HCT116 (cell line): ENCODE measurements at regions of chrX and their contacts with region 1.

Region 1: DNA sequence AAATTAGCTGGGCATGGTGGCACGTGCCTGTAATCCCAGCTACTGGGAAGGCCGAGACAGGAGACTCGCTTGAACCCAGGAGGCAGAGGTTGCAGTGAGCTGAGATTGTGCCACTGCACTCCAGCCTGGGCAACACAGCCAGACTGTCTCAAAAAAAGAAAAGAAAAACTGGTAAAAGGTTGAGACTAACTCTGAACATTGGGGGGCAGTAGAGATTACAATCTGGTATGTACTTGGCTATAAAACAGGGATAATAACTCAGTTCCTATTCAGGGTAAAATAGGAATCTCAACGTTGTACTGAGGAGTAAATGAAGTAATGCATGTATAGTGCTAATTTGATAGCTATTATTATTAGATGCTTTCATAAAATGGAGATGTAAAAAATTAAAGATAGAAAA is 12.5 kb upstream of the KLF8 start:
- DNase-seq: peak; percentile 12
- ATAC-seq: peak; percentile 64; the same call in 1 of the 2 replicates
- H3K4me3 ChIP-seq: no peak overlapping the region
- H3K27ac ChIP-seq: no peak overlapping the region
- H3K4me1 ChIP-seq: no peaks in the 10 kb centered on the region
- H3K27me3 ChIP-seq: no peaks in the 10 kb centered on the region
- CTCF ChIP-seq: peak; percentile 13 to 36 (median 22); a peak in 3 of 6 replicates
- POLR2A ChIP-seq: no peak
- RAD21 ChIP-seq: peak; percentile 46; the same call in 1 of the 2 replicates

Region 2: DNA sequence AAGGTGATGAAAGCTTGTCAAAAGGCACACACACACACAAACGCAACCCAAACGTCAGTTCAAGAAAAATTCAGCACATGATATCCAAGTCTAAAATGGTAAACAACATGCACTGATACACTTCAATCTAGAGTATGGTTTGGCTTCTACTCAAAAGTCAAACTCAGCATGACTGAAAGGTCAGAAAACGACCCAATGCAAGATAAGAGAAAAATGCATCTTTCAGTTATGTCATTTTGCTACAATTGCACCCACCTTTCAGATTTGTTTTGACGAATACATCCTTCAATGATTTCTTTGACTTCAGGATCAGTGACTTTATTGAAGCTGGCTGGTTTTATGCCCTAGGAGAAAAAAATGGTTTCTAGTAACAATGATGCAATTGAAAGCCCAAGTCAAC is 1918.2 kb before region 1 on chrX:
- CTCF ChIA-PET with region 1: no interaction called
- POLR2A ChIA-PET with region 1: no interaction called
- RAD21 ChIA-PET with region 1: no interaction called
- intact Hi-C with region 1: no loop called
- DNase-seq: no peak
- ATAC-seq: no peak
- H3K4me3 ChIP-seq: no peak overlapping the region
- H3K27ac ChIP-seq: no peak overlapping the region
- H3K4me1 ChIP-seq: no peaks in the 10 kb centered on the region
- H3K27me3 ChIP-seq: no peaks in the 10 kb centered on the region
- CTCF ChIP-seq: no peak
- POLR2A ChIP-seq: no peak
- RAD21 ChIP-seq: no peak

Region 3: GRCh38 chrX:55919367-55920221 is 300.1 kb before region 1 on chrX:
- CTCF ChIA-PET with region 1: no interaction called
- POLR2A ChIA-PET with region 1: no interaction called
- RAD21 ChIA-PET with region 1: no interaction called
- intact Hi-C with region 1: loop called (anchors 10 kb)
- DNase-seq: no peak
- ATAC-seq: peak; percentile 75
- H3K4me3 ChIP-seq: no peak overlapping the region
- H3K27ac ChIP-seq: peak overlapping the region; percentile 8; the same call in 1 of the 2 replicates
- H3K4me1 ChIP-seq: peaks cover 0 to 15% of the 10 kb centered on the region in 2 experiments; a peak in 2 of 4 replicates
- H3K27me3 ChIP-seq: no peaks in the 10 kb centered on the region
- CTCF ChIP-seq: peak in 2 of 3 experiments; percentile 6 to 13; a peak in 1 of 6 replicates
- POLR2A ChIP-seq: no peak
- RAD21 ChIP-seq: no peak; the same call in 1 of the 2 replicates

Region 4: DNA sequence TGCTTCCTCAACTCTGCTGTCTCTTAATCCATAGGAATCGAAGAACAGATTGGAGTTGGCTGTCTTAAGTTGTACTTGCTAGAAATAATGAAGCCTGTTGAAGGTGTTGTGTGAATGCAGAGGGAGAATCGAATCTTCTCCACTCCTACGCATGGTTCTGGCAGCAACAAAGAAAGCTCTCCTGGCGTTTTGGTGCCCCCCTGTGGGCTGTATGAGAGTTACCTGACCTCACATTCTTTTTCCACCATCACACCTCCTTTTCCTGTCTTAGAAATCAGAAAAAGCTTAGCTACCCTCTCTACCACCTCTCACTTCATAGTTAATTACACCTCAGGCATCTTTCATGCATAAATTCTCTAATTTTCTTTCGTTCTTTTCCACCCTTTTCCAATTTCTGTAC is 28.8 kb after region 1 on chrX:
- CTCF ChIA-PET with region 1: no interaction called
- POLR2A ChIA-PET with region 1: no interaction called
- RAD21 ChIA-PET with region 1: interaction called in 1 of 2 experiments, 3 read pairs
- intact Hi-C with region 1: loop called (anchors 1 kb)
- DNase-seq: peak; percentile 21
- ATAC-seq: peak; percentile 77
- H3K4me3 ChIP-seq: no peak overlapping the region
- H3K27ac ChIP-seq: no peak overlapping the region
- H3K4me1 ChIP-seq: no peaks in the 10 kb centered on the region
- H3K27me3 ChIP-seq: no peaks in the 10 kb centered on the region
- CTCF ChIP-seq: peak; percentile 46 to 59 (median 58)
- POLR2A ChIP-seq: no peak
- RAD21 ChIP-seq: peak; percentile 82